A673 (cell line): ENCODE measurements at regions of chr4 and their contacts with region 1.

Region 1: DNA sequence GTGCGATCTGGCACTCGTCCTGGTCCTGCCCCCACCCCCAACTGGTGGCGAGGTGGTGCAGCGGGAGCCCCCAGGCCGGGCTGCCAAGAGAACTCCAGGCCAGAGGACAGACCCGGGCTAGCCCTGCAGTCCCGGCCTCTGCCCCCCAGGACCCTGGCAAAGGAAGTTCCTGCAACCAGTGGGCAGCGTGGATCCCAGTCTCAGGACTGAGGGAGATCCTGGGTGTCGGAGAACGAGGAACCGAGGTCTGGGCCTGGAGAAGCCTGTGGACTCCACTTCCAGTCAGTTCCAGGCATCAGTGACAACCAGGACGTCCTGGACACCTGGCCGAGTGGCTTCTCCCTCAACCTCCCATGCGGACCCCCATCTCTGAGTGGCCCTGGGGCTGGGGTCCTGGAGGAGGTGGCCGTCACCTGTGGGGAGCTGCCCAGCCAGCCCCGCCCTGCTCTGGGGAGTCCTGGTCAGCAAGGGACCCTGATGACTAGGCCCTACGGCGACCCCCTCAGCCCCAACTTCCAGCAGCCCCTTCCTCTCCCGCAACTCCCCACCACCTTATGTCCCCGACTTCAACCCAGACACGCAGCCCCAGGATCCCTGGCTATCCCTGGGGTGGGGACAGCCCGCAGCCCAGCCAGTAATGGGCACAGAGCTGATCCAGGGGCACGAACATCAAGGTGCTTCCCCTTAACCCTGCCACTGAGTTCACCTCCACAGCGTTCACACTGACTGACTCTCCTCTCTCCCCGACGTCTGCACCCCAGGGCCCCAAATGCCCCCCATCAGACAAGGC is 53.7 kb upstream of the NKX1-1 start:
- DNase-seq: no peak
- H3K4me3 ChIP-seq: no peak overlapping the region
- H3K27ac ChIP-seq: no peak overlapping the region
- H3K4me1 ChIP-seq: no peaks in the 10 kb centered on the region
- H3K27me3 ChIP-seq: peaks cover 86% of the 10 kb centered on the region
- CTCF ChIP-seq: no peak

Region 2: DNA sequence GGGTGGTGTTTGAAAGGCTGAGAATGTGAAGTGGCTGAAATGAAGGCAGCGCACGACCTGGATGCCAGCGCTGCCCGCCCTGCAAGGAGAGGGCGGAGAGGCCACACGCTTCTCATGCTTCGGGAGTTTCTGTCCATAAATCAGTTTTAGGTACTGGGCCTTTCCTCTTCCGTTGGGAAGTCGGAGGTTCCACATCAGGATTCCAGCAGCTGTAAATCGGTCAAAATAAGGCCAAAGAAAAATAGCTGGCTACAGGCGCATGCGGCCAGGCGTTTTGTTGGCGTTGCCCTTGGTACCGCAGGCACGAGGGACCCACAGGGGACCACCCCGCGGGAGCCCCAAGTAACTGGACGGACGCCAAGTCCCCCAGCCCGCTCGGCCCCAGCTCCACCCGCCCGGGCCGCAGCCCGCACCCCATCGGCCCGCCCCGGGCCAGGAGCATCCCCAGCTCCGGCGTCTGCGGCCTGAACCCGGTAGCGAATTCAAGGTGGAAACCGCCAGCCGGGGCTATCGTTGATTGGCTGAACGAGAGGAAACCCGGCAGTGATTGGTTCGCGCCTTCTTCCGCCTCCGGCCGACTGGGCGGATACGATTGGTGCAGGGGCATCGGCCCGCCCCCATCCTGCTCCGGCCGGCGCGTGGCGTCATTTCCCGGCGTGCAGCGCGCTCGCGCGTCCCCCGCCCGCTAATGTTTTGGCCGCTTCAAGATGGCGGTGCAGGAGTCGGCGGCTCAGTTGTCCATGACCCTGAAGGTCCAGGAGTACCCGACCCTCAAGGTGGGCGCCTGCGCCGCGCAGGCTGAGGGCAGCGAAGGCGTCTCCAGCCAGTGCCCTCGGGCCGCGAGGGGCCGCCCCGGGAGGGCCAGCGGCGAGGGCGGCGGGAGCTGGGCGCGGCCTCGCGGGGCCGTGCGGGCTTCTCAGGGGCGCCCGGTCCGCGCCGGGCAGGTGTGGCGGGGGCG is 170.4 kb before region 1 on chr4 and contains the start of gene MAEA:
- CTCF ChIA-PET with region 1: no interaction called
- POLR2A ChIA-PET with region 1: no interaction called
- intact Hi-C with region 1: no loop called
- DNase-seq: peak; percentile 98
- H3K4me3 ChIP-seq: peak within 1 kb of the TSS; percentile 97
- H3K27ac ChIP-seq: peak within 1 kb of the TSS; percentile 81
- H3K4me1 ChIP-seq: peaks cover 9% of the 10 kb centered on the region
- H3K27me3 ChIP-seq: no peaks in the 10 kb centered on the region
- CTCF ChIP-seq: no peak
- total RNA-seq, gene MAEA: 85.9 and 87.0 TPM in 2 replicates

Region 3: GRCh38 chr4:1410491-1411325 is 49.2 kb before region 1 on chr4:
- CTCF ChIA-PET with region 1: no interaction called
- POLR2A ChIA-PET with region 1: no interaction called
- intact Hi-C with region 1: loop called (anchors 5 kb)
- DNase-seq: peak; percentile 76
- H3K4me3 ChIP-seq: no peak overlapping the region
- H3K27ac ChIP-seq: no peak overlapping the region
- H3K4me1 ChIP-seq: no peaks in the 10 kb centered on the region
- H3K27me3 ChIP-seq: peaks cover 91% of the 10 kb centered on the region
- CTCF ChIP-seq: no peak

Region 4: GRCh38 chr4:2497931-2498330 is 1038.0 kb after region 1 on chr4:
- CTCF ChIA-PET with region 1: no interaction called
- POLR2A ChIA-PET with region 1: no interaction called
- intact Hi-C with region 1: no loop called
- DNase-seq: no peak
- H3K4me3 ChIP-seq: no peak overlapping the region
- H3K27ac ChIP-seq: no peak overlapping the region
- H3K4me1 ChIP-seq: no peaks in the 10 kb centered on the region
- H3K27me3 ChIP-seq: no peaks in the 10 kb centered on the region
- CTCF ChIP-seq: no peak